Activated T-helper 2 cell treated with anti-CD3 and anti-CD28 coated beads, Interferon-gamma antibody, Interleukin-2, Interleukin-4, amounts not matched to agents 10 μg/mL and 5 μg/mL and 100 μg/mL, durations not matched to agents 14 hours and 24 hours and 36 hours (primary cell): ENCODE measurements at regions of chr10 and their contacts with region 1.

Region 1: GRCh38 chr10:96890172-96890513 is 58.0 kb downstream of the LCOR start:
- DNase-seq: no peak
- H3K4me3 Mint-ChIP-seq: no peak overlapping the region
- H3K27ac Mint-ChIP-seq: no peak overlapping the region
- H3K4me1 Mint-ChIP-seq: peaks cover 28% of the 10 kb centered on the region
- H3K27me3 Mint-ChIP-seq: no peaks in the 10 kb centered on the region

Region 2: GRCh38 chr10:96651998-96652431 is 238.1 kb before region 1 on chr10:
- intact Hi-C with region 1: no loop called
- DNase-seq: no peak
- H3K4me3 Mint-ChIP-seq: peak overlapping the region; percentile 1
- H3K27ac Mint-ChIP-seq: peak overlapping the region; percentile 67
- H3K4me1 Mint-ChIP-seq: peaks cover 48% of the 10 kb centered on the region
- H3K27me3 Mint-ChIP-seq: no peaks in the 10 kb centered on the region

Region 3: DNA sequence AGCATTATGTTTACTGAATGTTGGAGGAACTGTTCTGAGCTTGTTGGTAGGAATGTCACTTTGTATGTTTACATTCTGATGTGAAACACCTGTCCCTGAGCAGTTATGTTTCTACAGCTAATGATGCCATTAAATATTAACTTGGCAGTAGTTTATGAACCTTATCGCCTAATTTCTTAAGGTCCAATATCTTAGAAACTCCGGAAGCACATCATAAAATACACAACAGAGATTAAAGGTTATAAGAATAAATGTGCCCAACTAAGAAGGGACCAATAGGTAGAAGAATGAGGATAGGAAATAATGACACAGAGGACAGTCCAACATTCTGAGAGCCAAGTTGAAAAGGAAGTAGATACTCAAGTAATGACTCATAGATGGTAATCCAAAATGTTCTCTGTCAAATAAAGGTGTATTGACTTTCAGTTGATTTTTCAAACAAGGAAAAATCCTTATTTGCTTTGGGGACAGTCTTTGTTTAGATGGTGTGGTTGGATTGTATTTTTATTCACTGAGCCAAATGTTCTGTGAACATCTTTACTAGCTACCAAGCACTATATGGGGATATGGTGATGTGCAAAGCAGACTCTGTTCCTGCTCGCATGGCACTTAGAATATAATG is 26.1 kb before region 1 on chr10:
- intact Hi-C with region 1: loop called (anchors 2 kb)
- DNase-seq: no peak
- H3K4me3 Mint-ChIP-seq: no peak overlapping the region
- H3K27ac Mint-ChIP-seq: peak overlapping the region; percentile 58
- H3K4me1 Mint-ChIP-seq: peaks cover 21% of the 10 kb centered on the region
- H3K27me3 Mint-ChIP-seq: no peaks in the 10 kb centered on the region